PC-9 (cell line): ENCODE measurements at regions of chr3 and their contacts with region 1.

Region 1: DNA sequence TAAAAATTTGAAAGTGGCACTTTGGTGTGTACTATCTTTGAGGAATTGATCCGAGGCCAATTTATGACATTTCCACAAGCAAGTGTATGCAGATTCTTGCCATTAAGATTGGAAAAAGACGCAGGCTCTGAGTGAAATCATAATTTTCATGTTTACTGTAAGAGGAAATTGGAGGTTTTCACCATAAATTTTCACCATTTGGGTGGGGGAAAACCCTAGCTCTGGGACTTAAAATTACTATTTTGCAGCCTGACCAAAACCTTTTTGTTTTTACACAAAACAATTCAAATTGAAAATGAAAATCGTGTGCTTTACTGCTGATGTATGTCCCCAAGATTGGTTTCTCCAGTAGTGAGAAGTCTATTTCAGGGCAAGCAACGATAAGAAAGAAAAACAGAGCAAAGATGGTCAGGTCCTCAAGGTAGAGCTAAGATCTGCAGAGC is 282.6 kb downstream of the FOXP1 start:
- DNase-seq: no peak
- H3K4me3 ChIP-seq: no peak overlapping the region
- H3K27ac ChIP-seq: no peak overlapping the region
- H3K4me1 ChIP-seq: no peaks in the 10 kb centered on the region
- H3K27me3 ChIP-seq: no peaks in the 10 kb centered on the region
- CTCF ChIP-seq: no peak

Region 2: GRCh38 chr3:71087143-71088018 is 213.6 kb before region 1 on chr3:
- CTCF ChIA-PET with region 1: no interaction called
- POLR2A ChIA-PET with region 1: no interaction called
- intact Hi-C with region 1: no loop called
- DNase-seq: peak in 1 of 2 experiments; percentile 72
- H3K4me3 ChIP-seq: no peak overlapping the region
- H3K27ac ChIP-seq: no peak overlapping the region
- H3K4me1 ChIP-seq: no peaks in the 10 kb centered on the region
- H3K27me3 ChIP-seq: no peaks in the 10 kb centered on the region
- CTCF ChIP-seq: no peak

Region 3: DNA sequence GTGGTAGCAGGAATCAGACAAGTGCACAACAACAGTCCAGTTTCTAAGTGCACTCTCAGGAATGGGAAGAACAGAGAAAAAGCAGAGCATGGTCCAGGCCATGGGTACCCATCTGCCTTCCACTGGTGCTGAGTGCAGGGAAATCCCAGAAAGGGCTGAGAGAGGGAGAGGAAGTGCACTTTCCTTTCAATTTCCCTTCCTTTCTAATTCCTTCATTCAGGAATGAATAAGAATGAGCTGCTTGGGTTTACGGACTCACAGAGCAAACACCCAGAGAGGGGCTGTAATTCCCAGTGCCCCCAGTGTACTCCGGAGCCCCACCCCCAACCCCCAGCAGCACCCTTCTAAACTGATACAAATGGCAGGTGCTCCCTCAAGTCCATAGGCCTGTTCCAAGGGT is 18.0 kb before region 1 on chr3:
- CTCF ChIA-PET with region 1: no interaction called
- POLR2A ChIA-PET with region 1: interaction called, 11 read pairs
- intact Hi-C with region 1: no loop called
- DNase-seq: no peak
- H3K4me3 ChIP-seq: no peak overlapping the region
- H3K27ac ChIP-seq: no peak overlapping the region
- H3K4me1 ChIP-seq: no peaks in the 10 kb centered on the region
- H3K27me3 ChIP-seq: no peaks in the 10 kb centered on the region
- CTCF ChIP-seq: no peak